ENCODE measurements at regions of chr3 and their contacts with region 1.

Region 1: GRCh38 chr3:48507351-48508061 is 3.5 kb upstream of the SHISA5 start:
- DNase-seq: peak; percentile 47 to 88 (median 70)
- ATAC-seq: peak; percentile 86 to 88
- H3K4me3 Mint-ChIP-seq: peak overlapping the region in 8 of 10 donors; percentile 19 to 67 (median 38)
- H3K27ac Mint-ChIP-seq: peak overlapping the region; percentile 17 to 83 (median 78)
- H3K4me1 Mint-ChIP-seq: peaks cover 26 to 59% (median 48%) of the 10 kb centered on the region in 4 donors
- H3K27me3 Mint-ChIP-seq: no peaks in the 10 kb centered on the region

Region 2: DNA sequence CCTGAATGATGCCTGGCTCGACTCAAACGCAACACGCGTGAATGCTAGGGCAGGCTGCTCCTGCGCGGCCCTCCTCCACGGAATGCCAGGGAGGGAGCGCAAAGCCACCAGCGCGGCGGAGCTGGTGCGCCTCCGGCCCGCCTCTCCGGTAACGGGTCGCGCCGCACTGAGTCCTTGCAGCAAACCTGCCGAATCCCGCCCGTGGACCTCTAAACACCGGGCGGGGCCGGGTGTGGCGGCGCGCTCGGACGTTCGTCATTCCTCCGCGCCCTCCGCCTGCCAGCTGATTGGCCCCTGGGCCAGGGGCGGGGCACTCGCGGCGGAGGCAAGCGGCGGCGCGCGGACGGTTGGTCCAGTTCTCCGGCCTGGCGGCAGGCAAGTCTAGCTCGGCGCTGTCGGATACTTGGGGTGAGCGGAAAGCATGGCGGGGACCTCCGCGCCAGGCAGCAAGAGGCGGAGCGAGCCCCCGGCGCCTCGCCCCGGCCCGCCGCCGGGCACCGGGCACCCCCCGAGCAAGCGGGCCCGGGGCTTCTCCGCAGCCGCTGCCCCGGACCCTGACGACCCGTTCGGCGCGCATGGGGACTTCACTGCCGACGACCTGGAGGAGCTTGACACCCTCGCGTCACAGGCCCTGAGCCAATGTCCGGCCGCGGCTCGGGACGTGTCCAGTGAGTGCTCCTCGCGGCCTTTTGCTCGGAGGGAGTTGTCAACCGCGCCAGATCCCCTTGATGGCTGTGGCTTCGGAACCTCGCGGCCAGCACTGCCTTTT is 60.9 kb before region 1 on chr3 and contains the start of gene ATRIP:
- POLR2A ChIA-PET with region 1: interaction called, 23 read pairs
- DNase-seq: peak; percentile 78 to 91 (median 82)
- ATAC-seq: peak; percentile 95 to 98
- H3K4me3 Mint-ChIP-seq: peak within 1 kb of the TSS; percentile 86 to 98 (median 92)
- H3K27ac Mint-ChIP-seq: peak within 1 kb of the TSS; percentile 83 to 98 (median 95)
- H3K4me1 Mint-ChIP-seq: peaks cover 20 to 50% (median 42%) of the 10 kb centered on the region in 4 donors
- H3K27me3 Mint-ChIP-seq: no peaks in the 10 kb centered on the region
- polyA plus RNA-seq, gene ATRIP: 8.9 to 17.5 (median 13.1) TPM

Region 3: GRCh38 chr3:48465531-48466378 is 41.8 kb before region 1 on chr3:
- POLR2A ChIA-PET with region 1: interaction called, 16 read pairs
- DNase-seq: peak; percentile 63 to 82 (median 73)
- ATAC-seq: peak; percentile 97
- H3K4me3 Mint-ChIP-seq: peak overlapping the region; percentile 84 to 93 (median 90)
- H3K27ac Mint-ChIP-seq: peak overlapping the region; percentile 79 to 100 (median 96)
- H3K4me1 Mint-ChIP-seq: peaks cover 23 to 60% (median 59%) of the 10 kb centered on the region in 4 donors
- H3K27me3 Mint-ChIP-seq: no peaks in the 10 kb centered on the region

Region 4: DNA sequence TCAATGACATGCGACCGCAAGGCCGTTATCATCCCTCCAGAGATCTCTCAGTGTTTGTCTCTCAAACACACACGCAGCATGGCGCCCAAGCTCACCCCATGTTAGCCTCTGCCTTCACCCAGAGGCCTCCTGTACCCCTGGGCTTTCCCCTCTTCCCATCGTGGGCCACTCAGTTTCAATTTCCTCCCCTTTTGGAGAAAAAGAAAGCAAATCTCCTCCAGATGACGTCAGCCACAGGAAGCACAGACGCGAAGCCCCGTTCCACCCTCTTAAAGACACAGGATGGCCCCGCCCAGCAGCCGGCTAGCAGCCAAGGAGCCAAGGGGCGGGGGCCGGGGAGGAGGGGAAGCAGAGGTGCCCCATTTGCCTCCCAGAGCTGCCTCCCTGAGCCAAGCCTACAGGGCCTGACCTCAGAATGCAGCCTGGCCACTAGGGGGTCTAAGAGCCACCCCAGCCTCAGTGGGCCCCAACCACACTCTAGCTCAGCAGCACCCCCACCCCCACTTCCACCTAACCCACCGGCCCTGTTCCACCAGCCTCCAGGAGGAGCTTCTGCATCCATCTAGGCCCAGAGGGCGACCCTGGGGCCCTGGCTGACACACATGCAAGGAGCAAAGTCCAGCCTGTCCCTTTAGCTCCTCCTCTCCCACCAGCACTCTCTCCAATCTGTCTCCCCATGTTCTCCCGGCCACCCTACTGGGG is 34.4 kb before region 1 on chr3:
- POLR2A ChIA-PET with region 1: interaction called, 49 read pairs
- DNase-seq: peak; percentile 87 to 97 (median 94)
- ATAC-seq: peak; percentile 86 to 93
- H3K4me3 Mint-ChIP-seq: peak overlapping the region; percentile 84 to 100 (median 94)
- H3K27ac Mint-ChIP-seq: peak overlapping the region; percentile 95 to 100 (median 98)
- H3K4me1 Mint-ChIP-seq: peaks cover 26 to 76% (median 61%) of the 10 kb centered on the region in 4 donors
- H3K27me3 Mint-ChIP-seq: no peaks in the 10 kb centered on the region

Region 5: GRCh38 chr3:48478596-48479555 is 28.6 kb before region 1 on chr3:
- POLR2A ChIA-PET with region 1: interaction called, 49 read pairs
- DNase-seq: peak; percentile 35 to 88 (median 65)
- ATAC-seq: peak; percentile 88 to 89
- H3K4me3 Mint-ChIP-seq: peak overlapping the region; percentile 70 to 93 (median 88)
- H3K27ac Mint-ChIP-seq: peak overlapping the region; percentile 91 to 99 (median 97)
- H3K4me1 Mint-ChIP-seq: peaks cover 22 to 48% (median 43%) of the 10 kb centered on the region in 4 donors
- H3K27me3 Mint-ChIP-seq: no peaks in the 10 kb centered on the region

Region 6: DNA sequence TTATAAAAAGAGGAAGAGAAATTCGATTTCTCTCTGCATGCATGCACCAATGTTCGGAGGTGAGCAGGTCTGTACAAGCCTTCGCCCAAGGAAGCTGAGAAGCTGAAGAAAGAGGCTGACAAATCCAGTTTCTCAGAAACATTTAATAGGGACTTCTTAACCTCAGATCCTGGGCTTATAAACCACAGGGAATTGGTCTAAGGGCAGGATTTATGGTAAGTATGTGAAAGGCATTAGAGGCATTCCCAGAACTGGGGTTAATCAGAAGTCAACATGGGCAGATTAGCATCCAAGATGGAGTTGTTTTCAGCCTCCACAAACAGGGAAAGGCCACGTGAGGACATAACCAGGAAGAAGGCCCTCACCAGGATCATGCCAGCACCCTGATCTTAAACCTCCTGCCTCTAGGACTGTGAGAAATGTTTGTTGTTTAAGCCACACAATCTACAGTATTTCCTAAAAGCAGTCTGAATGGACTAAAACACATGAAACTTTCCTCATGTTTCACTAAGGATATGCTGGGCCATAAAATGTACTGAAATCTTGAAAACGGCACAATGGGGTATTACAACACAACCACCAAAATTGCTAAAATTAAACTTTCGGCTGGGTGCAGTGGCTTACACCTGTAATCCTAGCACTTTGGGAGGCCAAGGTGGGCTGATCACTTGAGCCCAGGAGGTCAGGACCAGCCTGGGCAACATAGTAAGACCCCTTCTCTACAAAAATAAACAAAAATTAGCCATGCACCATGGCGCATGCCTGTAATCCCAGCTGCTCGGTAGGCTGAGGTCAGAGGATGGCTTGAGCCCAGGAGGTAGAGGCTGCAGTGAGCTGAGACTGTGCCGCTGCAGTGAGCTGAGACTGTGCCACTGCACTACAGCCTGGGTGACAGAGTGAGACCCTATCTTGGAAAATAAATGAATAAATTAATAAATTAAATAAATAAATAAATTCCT is 14.7 kb before region 1 on chr3:
- POLR2A ChIA-PET with region 1: interaction called, 11 read pairs
- DNase-seq: no peak
- ATAC-seq: no peak
- H3K4me3 Mint-ChIP-seq: no peak overlapping the region
- H3K27ac Mint-ChIP-seq: peak overlapping the region in 1 of 10 donors; percentile 13
- H3K4me1 Mint-ChIP-seq: peaks cover 0 to 7% (median under 1%) of the 10 kb centered on the region in 4 donors
- H3K27me3 Mint-ChIP-seq: no peaks in the 10 kb centered on the region

Measured in naive thymus-derived CD8-positive, alpha-beta T cell (primary cell).